CD8-positive, alpha-beta memory T cell (primary cell): ENCODE measurements at regions of chr1 and their contacts with region 1.

Region 1: GRCh38 chr1:145720877-145721671 is 1.8 kb downstream of the CD160 start:
- DNase-seq: peak; percentile 58 to 80 (median 70)
- H3K4me3 ChIP-seq: peak overlapping the region; percentile 66
- H3K4me3 Mint-ChIP-seq: peak overlapping the region; percentile 79 to 97 (median 89)
- H3K27ac ChIP-seq: peak overlapping the region; percentile 43
- H3K27ac Mint-ChIP-seq: peak overlapping the region; percentile 62 to 97 (median 83)
- H3K4me1 ChIP-seq: peaks cover 34% of the 10 kb centered on the region
- H3K4me1 Mint-ChIP-seq: peaks cover 42 to 55% (median 55%) of the 10 kb centered on the region in 3 donors
- H3K27me3 ChIP-seq: peaks cover 3% of the 10 kb centered on the region
- H3K27me3 Mint-ChIP-seq: peaks cover 3 to 4% of the 10 kb centered on the region in 2 donors

Region 2: DNA sequence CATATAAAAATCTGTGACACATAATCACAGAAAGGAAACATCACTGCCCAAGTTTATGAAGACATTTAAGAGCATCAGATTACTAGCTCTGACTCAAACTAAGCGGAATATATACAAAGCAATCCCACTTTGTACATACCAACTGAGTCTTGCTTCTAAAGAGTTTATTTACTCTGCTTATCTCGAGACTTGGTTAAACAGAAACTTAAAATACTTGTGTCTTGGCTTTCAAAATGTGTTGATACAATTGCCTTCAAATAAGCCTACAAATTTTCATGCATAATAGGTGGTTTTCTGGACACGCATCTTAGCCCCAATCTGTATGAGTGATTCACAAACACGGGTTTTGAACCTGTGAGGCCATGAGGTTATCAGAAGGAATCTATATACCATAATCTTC is 19.2 kb after region 1 on chr1:
- CTCF ChIA-PET with region 1: interaction called, 23 read pairs
- POLR2A ChIA-PET with region 1: no interaction called
- DNase-seq: no peak
- H3K4me3 ChIP-seq: no peak overlapping the region
- H3K4me3 Mint-ChIP-seq: no peak overlapping the region
- H3K27ac ChIP-seq: no peak overlapping the region
- H3K27ac Mint-ChIP-seq: peak overlapping the region in 1 of 8 donors; percentile 25
- H3K4me1 ChIP-seq: no peaks in the 10 kb centered on the region
- H3K4me1 Mint-ChIP-seq: no peaks in the 10 kb centered on the region
- H3K27me3 ChIP-seq: no peaks in the 10 kb centered on the region
- H3K27me3 Mint-ChIP-seq: no peaks in the 10 kb centered on the region

Region 3: DNA sequence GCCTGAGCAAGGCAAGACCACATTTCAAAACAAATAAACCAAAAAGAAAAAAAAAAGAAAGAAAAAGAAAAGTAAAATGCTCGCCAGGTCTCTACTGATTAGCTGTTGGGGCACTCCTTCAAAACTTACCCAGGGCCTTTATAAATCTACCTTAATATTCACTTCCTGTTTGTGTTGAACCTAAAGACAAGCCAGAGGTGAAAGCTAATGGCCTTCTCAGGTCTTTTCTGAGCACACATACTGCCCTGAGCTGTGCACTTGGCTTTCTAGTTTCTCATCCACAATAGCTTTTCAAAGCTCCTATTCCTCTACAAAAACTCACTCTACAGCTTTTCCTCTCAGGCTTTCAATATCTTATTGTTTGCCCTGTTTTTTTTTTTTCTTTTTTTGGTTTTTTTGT is 52.3 kb after region 1 on chr1:
- CTCF ChIA-PET with region 1: no interaction called
- POLR2A ChIA-PET with region 1: no interaction called
- DNase-seq: no peak
- H3K4me3 ChIP-seq: no peak overlapping the region
- H3K4me3 Mint-ChIP-seq: no peak overlapping the region
- H3K27ac ChIP-seq: no peak overlapping the region
- H3K27ac Mint-ChIP-seq: peak overlapping the region; percentile 0 to 89 (median 66)
- H3K4me1 ChIP-seq: no peaks in the 10 kb centered on the region
- H3K4me1 Mint-ChIP-seq: peaks cover 17 to 21% (median 20%) of the 10 kb centered on the region in 3 donors
- H3K27me3 ChIP-seq: no peaks in the 10 kb centered on the region
- H3K27me3 Mint-ChIP-seq: no peaks in the 10 kb centered on the region

Region 4: GRCh38 chr1:145858894-145859490 is 137.9 kb after region 1 on chr1 and contains the start of gene PIAS3:
- CTCF ChIA-PET with region 1: no interaction called
- POLR2A ChIA-PET with region 1: no interaction called
- DNase-seq: peak; percentile 74 to 86 (median 80)
- H3K4me3 ChIP-seq: peak within 1 kb of the TSS; percentile 80
- H3K4me3 Mint-ChIP-seq: peak within 1 kb of the TSS; percentile 93 to 99 (median 97)
- H3K27ac ChIP-seq: peak within 1 kb of the TSS; percentile 56
- H3K27ac Mint-ChIP-seq: peak within 1 kb of the TSS; percentile 77 to 96 (median 90)
- H3K4me1 ChIP-seq: peaks cover 13% of the 10 kb centered on the region
- H3K4me1 Mint-ChIP-seq: peaks cover 11 to 29% (median 29%) of the 10 kb centered on the region in 3 donors
- H3K27me3 ChIP-seq: no peaks in the 10 kb centered on the region
- H3K27me3 Mint-ChIP-seq: peaks cover 0 to 1% of the 10 kb centered on the region in 2 donors
- total RNA-seq, gene PIAS3: 16.7 to 18.3 TPM